ENCODE measurements at regions of chr18 and their contacts with region 1.

Region 1: GRCh38 chr18:76697441-76697901 is 124.9 kb upstream of the ZNF236 start:
- DNase-seq: no peak
- H3K4me3 ChIP-seq: no peak overlapping the region; the same call in 1 of the 2 replicates
- H3K27ac ChIP-seq: no peak overlapping the region
- H3K27me3 ChIP-seq: peaks cover 8% of the 10 kb centered on the region
- CTCF ChIP-seq: no peak

Region 2: GRCh38 chr18:76475452-76476194 is 221.8 kb before region 1 on chr18:
- CTCF ChIA-PET with region 1: interaction called, 14 read pairs
- POLR2A ChIA-PET with region 1: no interaction called
- DNase-seq: no peak
- H3K4me3 ChIP-seq: no peak overlapping the region
- H3K27ac ChIP-seq: no peak overlapping the region
- H3K27me3 ChIP-seq: no peaks in the 10 kb centered on the region
- CTCF ChIP-seq: no peak

Region 3: GRCh38 chr18:76564127-76564526 is 133.3 kb before region 1 on chr18:
- CTCF ChIA-PET with region 1: no interaction called
- POLR2A ChIA-PET with region 1: no interaction called
- DNase-seq: peak; percentile 61
- H3K4me3 ChIP-seq: no peak overlapping the region
- H3K27ac ChIP-seq: peak overlapping the region; percentile 99
- H3K27me3 ChIP-seq: no peaks in the 10 kb centered on the region
- CTCF ChIP-seq: no peak

Region 4: DNA sequence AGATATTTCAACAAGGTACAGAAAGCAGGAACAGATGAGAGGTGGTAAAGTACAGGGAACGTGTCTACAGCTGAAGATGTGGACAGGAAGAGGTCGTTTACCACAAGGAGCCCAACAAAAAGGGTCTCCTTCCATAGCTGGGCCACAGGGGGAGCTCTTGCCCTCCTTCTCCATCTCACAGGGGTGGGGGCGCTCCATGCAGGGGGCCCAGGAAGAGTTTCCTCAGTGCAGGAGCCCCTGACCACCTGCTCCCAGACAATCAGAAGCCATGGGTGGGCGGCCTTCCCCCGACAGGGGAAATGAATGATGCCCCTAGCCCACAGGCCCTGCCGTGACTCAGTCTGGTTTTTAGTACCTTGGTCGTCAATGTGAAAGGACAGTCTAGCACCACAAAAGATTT is 38.8 kb before region 1 on chr18:
- CTCF ChIA-PET with region 1: no interaction called
- POLR2A ChIA-PET with region 1: no interaction called
- DNase-seq: no peak
- H3K4me3 ChIP-seq: no peak overlapping the region
- H3K27ac ChIP-seq: no peak overlapping the region
- H3K27me3 ChIP-seq: peaks cover 27% of the 10 kb centered on the region
- CTCF ChIP-seq: peak; percentile 41

Region 5: DNA sequence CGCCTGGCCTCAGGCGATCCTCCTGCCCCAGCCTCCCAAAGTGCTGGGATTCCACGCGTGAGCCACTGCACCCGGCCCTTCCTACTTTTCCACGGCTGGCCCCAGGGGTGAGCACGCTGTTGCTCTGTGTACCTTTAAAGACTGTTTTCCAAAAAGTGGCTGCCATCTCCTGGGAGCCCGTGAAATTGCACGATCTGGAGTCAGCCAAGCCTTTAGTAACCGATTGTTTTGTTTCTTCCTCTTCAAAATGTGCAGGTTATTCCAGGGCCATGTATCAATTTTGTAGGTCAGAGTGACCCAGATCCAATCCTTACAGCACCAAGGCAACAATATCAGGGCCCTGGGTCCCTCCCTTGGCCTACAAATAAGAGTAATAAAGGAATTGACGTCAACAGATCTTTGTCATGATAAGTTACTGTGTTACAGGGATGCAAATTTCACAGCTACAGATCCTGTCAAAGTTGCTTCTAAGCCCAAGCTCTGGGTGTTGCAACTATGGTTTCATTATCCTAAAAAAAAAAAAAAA is 10.7 kb before region 1 on chr18:
- CTCF ChIA-PET with region 1: interaction called, 12 read pairs
- POLR2A ChIA-PET with region 1: no interaction called
- DNase-seq: peak; percentile 24
- H3K4me3 ChIP-seq: no peak overlapping the region
- H3K27ac ChIP-seq: no peak overlapping the region
- H3K27me3 ChIP-seq: peaks cover 33% of the 10 kb centered on the region
- CTCF ChIP-seq: peak; percentile 80

Region 6: DNA sequence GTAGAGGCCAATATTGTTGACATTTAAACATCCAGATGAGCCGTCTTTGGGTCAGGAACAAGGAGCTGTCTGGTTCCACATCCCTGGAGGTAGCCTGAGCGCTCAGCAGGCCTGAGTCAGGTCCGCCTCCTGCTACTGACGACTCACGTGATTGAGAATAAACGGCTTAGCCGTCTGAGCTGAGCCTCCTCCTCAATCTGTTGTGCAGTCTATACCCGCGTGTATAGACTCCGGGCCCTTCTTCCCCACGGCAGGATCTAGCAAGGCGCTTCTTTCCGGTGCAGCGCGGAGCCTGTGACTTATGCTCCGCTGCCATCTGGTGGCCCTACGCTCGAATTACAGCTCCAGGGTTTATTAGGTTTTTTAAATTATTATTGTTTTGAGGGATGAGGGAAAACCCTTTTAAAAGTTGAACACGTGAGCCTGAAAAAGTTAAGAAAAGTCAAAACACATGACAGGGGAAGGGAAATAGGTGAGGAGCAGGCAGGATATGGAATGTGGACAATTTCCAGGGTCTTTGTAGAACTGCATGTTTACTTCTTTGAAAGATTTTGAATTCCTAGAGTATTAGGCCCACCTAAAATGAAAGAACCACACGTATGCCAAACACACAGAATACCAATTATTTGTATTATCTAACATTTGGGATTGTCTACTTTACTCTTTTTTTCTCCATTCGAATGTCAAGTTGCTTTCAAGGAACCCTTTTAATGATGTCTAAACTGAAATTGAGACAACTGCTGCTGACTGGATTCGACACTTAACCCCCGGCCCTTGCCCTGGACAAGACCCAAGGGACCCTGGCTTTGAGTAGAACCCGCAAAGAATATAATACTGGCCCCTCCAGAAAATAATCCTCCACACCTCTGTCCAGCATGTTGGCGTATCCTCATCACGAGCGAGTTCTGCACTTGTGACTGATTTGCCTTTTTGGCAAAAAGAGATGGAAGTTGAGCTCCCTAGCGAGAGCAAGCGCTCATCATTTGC is 12.5 kb after region 1 on chr18:
- CTCF ChIA-PET with region 1: interaction called, 13 read pairs
- POLR2A ChIA-PET with region 1: no interaction called
- DNase-seq: peak; percentile 41
- H3K4me3 ChIP-seq: no peak overlapping the region
- H3K27ac ChIP-seq: no peak overlapping the region
- H3K27me3 ChIP-seq: peaks cover 5% of the 10 kb centered on the region
- CTCF ChIP-seq: peak; percentile 93

Region 7: DNA sequence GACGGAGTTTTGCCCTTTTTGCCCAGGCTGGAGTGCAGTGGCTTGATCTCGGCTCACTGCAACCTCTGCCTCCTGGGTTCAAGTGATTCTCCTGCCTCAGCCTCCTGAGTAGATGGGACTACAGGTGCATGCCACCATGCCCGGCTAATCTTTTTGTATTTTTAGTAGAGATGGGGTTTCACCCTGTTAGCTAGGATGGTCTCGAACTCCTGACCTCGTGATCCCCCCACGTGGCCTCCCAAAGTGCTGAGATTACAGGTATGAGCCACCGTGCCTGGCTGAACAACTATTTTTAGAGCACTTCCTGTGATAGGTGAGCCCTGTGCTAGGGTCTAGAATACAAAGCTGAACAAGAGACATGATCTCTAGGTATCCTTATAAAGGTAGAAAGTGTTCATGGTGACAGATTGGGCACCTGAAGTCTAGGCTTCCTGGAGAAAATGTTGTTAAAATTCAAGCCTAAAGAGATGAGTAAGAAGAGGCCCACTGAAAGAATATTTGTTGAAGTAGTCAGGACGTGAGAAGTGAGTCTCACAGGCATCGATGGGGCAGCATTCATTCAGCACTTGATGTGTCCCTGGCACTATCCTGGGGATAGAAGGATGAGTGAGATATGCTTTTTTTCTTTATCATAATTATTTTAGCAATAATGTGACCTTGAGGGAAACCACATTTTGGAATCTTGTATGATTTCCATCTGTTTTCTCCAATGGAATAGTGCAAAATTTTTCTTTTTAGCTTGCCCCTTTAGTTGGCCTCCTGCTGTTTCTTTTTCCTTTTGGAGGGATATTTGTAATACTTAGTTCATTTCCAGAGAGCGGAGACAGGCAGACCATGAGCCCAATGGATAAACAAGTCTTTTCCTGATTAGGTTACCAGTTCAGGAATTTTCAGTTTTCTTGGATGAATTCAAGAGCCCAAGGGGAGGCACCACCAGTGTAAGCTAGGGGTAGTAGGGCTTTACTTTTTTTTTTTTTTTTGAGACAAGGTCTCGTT is 130.0 kb after region 1 on chr18:
- CTCF ChIA-PET with region 1: no interaction called
- POLR2A ChIA-PET with region 1: no interaction called
- DNase-seq: no peak
- H3K4me3 ChIP-seq: no peak overlapping the region
- H3K27ac ChIP-seq: peak overlapping the region; percentile 52
- H3K27me3 ChIP-seq: no peaks in the 10 kb centered on the region
- CTCF ChIP-seq: no peak

Measured in AG04450 (cell line).